MCF 10A (cell line): ENCODE measurements at regions of chr17 and their contacts with region 1.

Region 1: GRCh38 chr17:63126587-63126986 is 160.6 kb downstream of the TANC2 start:
- DNase-seq: peak; percentile 6
- H3K4me3 Mint-ChIP-seq: no peak overlapping the region
- H3K27ac Mint-ChIP-seq: no peak overlapping the region
- H3K4me1 Mint-ChIP-seq: no peaks in the 10 kb centered on the region
- H3K27me3 Mint-ChIP-seq: no peaks in the 10 kb centered on the region
- CTCF ChIP-seq: no peak

Region 2: DNA sequence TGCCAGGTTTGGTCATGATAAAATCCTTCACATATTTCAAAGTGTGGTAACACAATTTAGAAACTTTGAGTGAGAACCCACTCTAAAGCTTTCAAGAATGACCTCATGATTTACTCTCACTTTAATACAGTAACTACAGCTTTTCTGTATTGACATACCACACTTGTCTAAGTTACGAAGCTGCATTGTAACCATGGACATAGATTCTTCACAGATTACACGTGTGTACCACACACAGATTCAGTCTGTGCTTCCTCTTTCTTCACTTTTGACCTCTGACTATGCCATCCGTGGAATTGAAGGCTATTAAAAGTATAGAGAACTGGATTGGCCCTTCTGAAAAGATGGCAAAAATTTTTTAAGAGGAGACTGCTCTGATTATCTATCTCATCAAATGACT is 12.1 kb after region 1 on chr17:
- CTCF ChIA-PET with region 1: interaction called, 4 read pairs
- POLR2A ChIA-PET with region 1: interaction called, 10 read pairs
- intact Hi-C with region 1: no loop called
- DNase-seq: no peak
- H3K4me3 Mint-ChIP-seq: no peak overlapping the region
- H3K27ac Mint-ChIP-seq: no peak overlapping the region
- H3K4me1 Mint-ChIP-seq: peaks cover 11% of the 10 kb centered on the region
- H3K27me3 Mint-ChIP-seq: no peaks in the 10 kb centered on the region
- CTCF ChIP-seq: no peak

Region 3: GRCh38 chr17:63178530-63178929 is 51.9 kb after region 1 on chr17:
- CTCF ChIA-PET with region 1: no interaction called
- POLR2A ChIA-PET with region 1: no interaction called
- intact Hi-C with region 1: no loop called
- DNase-seq: no peak
- H3K4me3 Mint-ChIP-seq: no peak overlapping the region
- H3K27ac Mint-ChIP-seq: no peak overlapping the region
- H3K4me1 Mint-ChIP-seq: peaks cover 10% of the 10 kb centered on the region
- H3K27me3 Mint-ChIP-seq: no peaks in the 10 kb centered on the region
- CTCF ChIP-seq: no peak